CD14-positive monocyte (primary cell): ENCODE measurements at regions of chr11 and their contacts with region 1.

Region 1: DNA sequence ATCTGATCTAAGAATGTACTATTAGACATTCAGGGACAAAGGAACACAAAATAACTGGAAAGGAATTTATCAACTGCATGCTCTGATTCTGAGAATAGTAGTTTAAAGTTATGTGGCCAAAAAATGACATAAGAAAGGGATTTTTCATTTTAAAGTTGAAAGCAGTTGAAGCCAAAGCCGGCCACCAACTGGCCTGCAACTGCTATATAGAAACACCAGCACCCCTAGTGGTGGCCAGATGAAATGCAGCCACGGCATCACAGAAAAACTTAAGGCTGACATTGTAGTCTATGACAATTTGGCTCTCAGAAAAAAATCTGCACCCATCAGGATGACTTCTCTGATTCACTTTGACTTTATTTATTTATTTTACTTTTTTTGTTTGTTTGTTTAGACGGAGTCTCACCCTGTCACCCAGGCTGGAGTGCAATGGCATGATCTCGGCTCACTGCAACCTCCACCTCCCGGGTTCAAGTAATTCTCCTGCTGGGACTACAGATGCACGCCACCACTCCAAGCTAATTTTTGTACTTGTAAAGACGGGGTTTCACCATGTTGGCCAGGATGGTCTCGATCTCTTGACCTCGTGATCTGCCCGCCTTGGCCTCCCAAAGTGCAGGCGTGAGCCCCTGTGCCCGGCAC is 59.2 kb downstream of the SLC35F2 start:
- DNase-seq: peak; percentile 54 to 70 (median 63)
- H3K4me3 ChIP-seq: no peak overlapping the region
- H3K4me3 Mint-ChIP-seq: no peak overlapping the region
- H3K27ac ChIP-seq: no peak overlapping the region
- H3K27ac Mint-ChIP-seq: no peak overlapping the region
- H3K4me1 ChIP-seq: no peaks in the 10 kb centered on the region
- H3K4me1 Mint-ChIP-seq: no peaks in the 10 kb centered on the region
- H3K27me3 ChIP-seq: peaks cover 15% of the 10 kb centered on the region in 2 donors
- H3K27me3 Mint-ChIP-seq: peaks cover 19 to 24% (median 23%) of the 10 kb centered on the region in 3 donors
- CTCF ChIP-seq: peak; percentile 98

Region 2: GRCh38 chr11:107858217-107859070 is 59.1 kb after region 1 on chr11 and contains the start of gene SLC35F2:
- intact Hi-C with region 1: loop called in 1 of 2 experiments (anchors 5 kb)
- DNase-seq: peak; percentile 37 to 57 (median 44)
- H3K4me3 ChIP-seq: peak within 1 kb of the TSS; percentile 61 to 83 (median 64)
- H3K4me3 Mint-ChIP-seq: peak within 1 kb of the TSS; percentile 92 to 94
- H3K27ac ChIP-seq: peak within 1 kb of the TSS in 1 of 2 donors; percentile 32
- H3K27ac Mint-ChIP-seq: peak within 1 kb of the TSS; percentile 12 to 90 (median 67)
- H3K4me1 ChIP-seq: peaks cover 24 to 25% of the 10 kb centered on the region in 2 donors
- H3K4me1 Mint-ChIP-seq: peaks cover 28% of the 10 kb centered on the region
- H3K27me3 ChIP-seq: peaks cover 3 to 21% of the 10 kb centered on the region in 2 donors
- H3K27me3 Mint-ChIP-seq: peaks cover 28 to 41% (median 40%) of the 10 kb centered on the region in 3 donors
- CTCF ChIP-seq: no peak
- polyA plus RNA-seq, gene SLC35F2: 0.24 to 0.25 TPM in 2 of 3 donors, not detected in the other